Sciatic nerve (tissue), 2 donors: ENCODE measurements at regions of chr13 and their contacts with region 1.

Region 1: DNA sequence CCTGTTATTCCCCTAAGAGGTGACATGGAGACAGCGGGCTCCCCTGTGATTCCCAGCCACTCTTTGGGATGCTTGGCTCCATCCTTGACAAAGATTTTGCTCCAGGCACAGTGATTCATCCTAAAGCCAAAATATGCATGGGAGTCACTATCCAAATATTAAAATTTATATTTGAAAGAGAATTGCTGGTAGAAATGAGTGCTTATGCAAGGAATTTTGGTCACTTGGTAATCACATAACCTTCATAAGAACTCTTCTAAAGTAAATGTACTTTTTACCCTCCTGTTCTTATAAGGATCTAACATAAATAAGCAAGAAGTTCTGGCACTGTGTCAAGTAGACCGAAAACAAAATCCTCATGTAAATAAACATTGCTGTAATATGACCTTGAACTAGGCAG is 385.8 kb downstream of the ITGBL1 start:
- DNase-seq: no peak
- ATAC-seq: no peak

Region 2: DNA sequence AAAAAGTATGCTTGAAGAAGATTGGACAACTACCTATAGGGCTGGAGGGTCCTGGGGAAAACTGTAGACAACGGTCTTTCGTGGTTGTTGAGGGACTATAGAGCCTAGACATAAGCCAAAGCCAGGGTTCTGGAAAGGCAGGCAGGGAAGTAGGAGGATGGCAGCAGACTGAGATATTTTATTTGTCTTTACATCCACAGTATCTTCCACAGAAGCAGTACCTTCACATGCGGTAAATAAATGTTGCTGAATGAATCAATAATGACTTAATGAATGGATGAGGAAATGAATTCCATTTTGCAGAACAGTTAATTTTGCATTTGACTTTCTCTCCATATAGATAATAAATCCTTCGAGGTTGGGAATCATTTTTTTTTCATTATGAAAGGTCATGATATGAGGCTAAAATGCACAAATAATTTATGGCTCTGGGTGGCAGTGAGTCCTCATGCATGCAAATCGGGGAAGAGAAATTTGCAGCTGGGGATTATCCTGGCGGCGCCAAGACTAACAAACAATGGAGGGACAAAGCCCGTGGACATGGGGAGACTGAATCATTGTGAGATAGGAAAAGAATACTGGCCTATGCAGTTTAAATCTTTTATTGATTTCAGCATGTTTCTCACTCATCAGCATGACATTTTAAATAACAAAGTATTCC is 1109.6 kb after region 1 on chr13:
- intact Hi-C with region 1: loop called (anchors 5 kb)
- DNase-seq: no peak
- ATAC-seq: peak; percentile 65